ENCODE measurements at regions of chr11 and their contacts with region 1.

Region 1: DNA sequence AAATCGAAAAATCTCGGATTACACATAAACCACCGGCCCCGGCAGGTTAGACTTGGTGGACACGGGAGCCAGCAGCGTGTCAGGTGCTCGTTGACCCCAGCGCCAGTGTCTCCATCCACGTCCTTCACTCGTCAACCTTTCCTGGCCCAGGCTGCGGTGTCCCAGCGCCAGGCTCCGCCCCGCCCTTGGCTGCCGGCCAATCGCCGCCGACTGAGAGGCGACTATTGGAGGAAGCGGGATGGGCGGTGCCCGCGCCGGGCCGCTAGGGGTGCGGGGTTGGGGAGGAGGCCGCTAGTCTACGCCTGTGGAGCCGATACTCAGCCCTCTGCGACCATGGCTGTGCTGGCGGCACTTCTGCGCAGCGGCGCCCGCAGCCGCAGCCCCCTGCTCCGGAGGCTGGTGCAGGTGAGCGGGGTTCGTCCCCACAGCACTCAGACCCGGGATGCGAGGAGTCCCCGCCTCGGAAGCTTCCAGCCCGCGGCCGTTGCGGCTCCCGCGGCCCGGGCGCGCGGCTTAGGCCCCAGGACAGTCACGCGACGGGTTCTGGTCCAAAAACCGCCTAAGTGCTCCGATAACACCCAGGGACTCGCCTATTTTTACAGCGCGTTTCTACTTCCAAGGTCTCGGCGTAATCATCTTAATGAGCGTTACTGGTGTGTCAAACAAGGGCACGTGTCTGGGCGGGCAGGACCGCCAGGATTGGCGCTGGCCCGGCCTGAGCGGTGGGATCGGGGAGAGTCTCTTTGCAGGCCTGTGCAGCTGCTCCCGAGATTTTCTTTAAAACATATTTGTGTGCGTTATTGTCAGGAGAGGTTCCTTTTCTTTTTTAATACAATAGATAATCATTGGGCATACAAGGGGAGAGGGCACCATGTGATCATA is at the start of gene ACAT1:
- DNase-seq: peak; percentile 99
- ATAC-seq: peak; percentile 91 to 95 (median 94)
- H3K4me3 ChIP-seq: peak within 1 kb of the TSS; percentile 87
- H3K27ac ChIP-seq: peak within 1 kb of the TSS; percentile 95
- H3K4me1 ChIP-seq: peaks cover 34% of the 10 kb centered on the region
- H3K27me3 ChIP-seq: no peaks in the 10 kb centered on the region
- CTCF ChIP-seq: peak; percentile 29
- total RNA-seq, gene ACAT1: 156 to 263 (median 208) TPM

Region 2: GRCh38 chr11:108170184-108170583 is 48.7 kb after region 1 on chr11:
- intact Hi-C with region 1: no loop called
- DNase-seq: no peak
- ATAC-seq: no peak
- H3K4me3 ChIP-seq: peak overlapping the region; percentile 33
- H3K27ac ChIP-seq: no peak overlapping the region
- H3K4me1 ChIP-seq: no peaks in the 10 kb centered on the region
- H3K27me3 ChIP-seq: no peaks in the 10 kb centered on the region
- CTCF ChIP-seq: no peak

Region 3: GRCh38 chr11:108222686-108223448 is 101.4 kb after region 1 on chr11 and contains the start of gene ATM:
- intact Hi-C with region 1: loop called (anchors 5 kb)
- DNase-seq: peak; percentile 100
- ATAC-seq: peak; percentile 96 to 98 (median 98)
- H3K4me3 ChIP-seq: peak within 1 kb of the TSS; percentile 85
- H3K27ac ChIP-seq: peak within 1 kb of the TSS; percentile 90
- H3K4me1 ChIP-seq: peaks cover 16% of the 10 kb centered on the region
- H3K27me3 ChIP-seq: no peaks in the 10 kb centered on the region
- CTCF ChIP-seq: peak; percentile 70
- total RNA-seq, gene ATM: 14.9 to 22.7 (median 17.2) TPM

Region 4: DNA sequence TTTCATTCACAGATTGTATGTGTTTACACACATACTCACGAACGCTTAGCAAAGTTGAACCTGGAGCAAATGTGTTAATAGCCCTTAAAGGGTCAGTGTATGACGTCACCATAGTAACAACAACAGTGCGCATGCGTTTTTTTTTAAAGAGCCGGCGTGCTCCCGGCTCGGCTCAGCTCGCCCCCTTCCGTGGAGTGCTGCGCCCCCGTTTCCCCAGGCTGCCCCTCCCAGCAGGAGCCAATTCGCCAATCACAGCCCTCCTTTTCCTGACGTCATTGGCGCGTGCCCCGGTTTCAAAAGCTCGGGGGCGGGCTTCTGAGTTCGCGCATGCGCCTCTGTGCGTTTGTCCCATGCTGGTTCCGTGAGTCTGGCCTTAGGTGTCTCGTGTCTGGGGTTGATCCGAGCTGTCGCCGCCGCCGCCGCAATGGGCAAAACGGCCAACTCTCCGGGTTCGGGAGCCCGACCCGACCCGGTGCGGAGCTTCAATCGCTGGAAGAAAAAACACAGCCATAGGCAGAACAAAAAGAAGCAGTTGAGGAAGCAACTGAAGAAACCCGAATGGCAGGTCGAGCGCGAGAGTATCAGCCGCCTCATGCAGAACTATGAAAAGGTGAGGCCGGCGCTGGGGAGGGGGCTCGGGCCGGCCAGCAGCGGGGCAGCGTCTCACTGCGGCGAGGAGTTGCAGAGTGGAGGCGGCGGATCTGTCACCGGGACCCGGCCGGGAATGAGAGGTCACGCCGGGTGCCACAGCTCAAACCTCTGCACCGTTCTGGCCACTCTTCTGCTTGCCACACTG is 543.4 kb after region 1 on chr11 and contains the start of gene DDX10:
- intact Hi-C with region 1: loop called in 1 of 2 experiments (anchors 5 kb)
- DNase-seq: peak; percentile 97 to 99
- ATAC-seq: peak; percentile 99
- H3K4me3 ChIP-seq: peak within 1 kb of the TSS; percentile 98
- H3K27ac ChIP-seq: peak within 1 kb of the TSS; percentile 87
- H3K4me1 ChIP-seq: peaks cover 20% of the 10 kb centered on the region
- H3K27me3 ChIP-seq: no peaks in the 10 kb centered on the region
- CTCF ChIP-seq: peak; percentile 7
- total RNA-seq, gene DDX10: 10.0 to 15.4 (median 11.9) TPM

Measured in psoas muscle (tissue), 8 donors.